ENCODE measurements at regions of chr12 and their contacts with region 1.

Region 1: GRCh38 chr12:5083955-5084849 is 40.5 kb downstream of the KCNA5 start:
- DNase-seq: peak; percentile 60
- ATAC-seq: no peak
- H3K4me3 ChIP-seq: no peak overlapping the region
- H3K27ac ChIP-seq: no peak overlapping the region
- H3K4me1 ChIP-seq: no peaks in the 10 kb centered on the region
- H3K27me3 ChIP-seq: peaks cover 17% of the 10 kb centered on the region; the same call in 1 of the 2 replicates
- CTCF ChIP-seq: peak; percentile 62

Region 2: DNA sequence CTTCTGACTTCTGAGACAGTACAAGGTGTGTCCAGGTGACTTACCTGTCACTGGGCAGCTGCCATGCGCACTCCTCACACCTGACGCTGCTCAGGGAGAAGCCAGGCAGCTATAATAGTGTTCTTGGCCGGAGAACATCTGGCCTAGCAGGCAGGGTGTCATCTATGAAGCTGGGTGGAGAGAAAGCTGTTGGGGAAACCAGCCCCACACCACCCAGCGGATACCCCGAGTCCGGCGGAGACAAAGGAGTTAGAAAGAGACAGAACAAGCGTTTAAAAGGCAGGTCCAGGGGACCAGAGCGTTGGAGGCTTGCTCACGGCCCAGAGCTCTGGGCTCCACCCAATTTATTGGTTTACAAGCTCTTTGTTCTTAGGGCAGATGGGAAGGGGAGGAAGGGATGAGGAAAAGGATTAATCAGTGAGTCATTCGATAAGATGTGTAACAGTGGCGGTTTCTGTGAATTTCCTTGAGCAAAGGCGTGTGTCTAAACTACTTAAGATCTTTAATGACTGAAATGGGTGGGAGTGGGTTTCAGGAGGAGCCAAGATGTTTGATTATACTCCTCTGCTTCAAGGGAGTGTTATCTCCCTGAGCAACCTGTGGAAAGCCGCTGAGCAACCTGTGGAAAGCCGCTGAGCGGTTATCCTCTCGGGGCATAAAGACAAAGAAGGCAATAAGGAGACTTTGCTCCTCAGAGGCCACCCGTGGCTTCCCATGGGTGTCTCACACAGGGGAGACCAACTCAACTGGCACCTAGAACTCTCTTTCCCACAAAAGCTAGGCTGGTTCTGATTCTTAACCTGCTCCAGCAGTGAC is 364.2 kb before region 1 on chr12 and contains the start of gene GALNT8:
- CTCF ChIA-PET with region 1: interaction called, 11 read pairs
- POLR2A ChIA-PET with region 1: no interaction called
- intact Hi-C with region 1: no loop called
- DNase-seq: peak; percentile 9
- ATAC-seq: no peak
- H3K4me3 ChIP-seq: no peak within 1 kb of the TSS
- H3K27ac ChIP-seq: no peak within 1 kb of the TSS
- H3K4me1 ChIP-seq: no peaks in the 10 kb centered on the region
- H3K27me3 ChIP-seq: peaks cover 18% of the 10 kb centered on the region
- CTCF ChIP-seq: no peak
- total RNA-seq, gene GALNT8: not detected in 2 replicates

Region 3: GRCh38 chr12:4975574-4975973 is 108.6 kb before region 1 on chr12:
- CTCF ChIA-PET with region 1: no interaction called
- POLR2A ChIA-PET with region 1: no interaction called
- intact Hi-C with region 1: no loop called
- DNase-seq: no peak
- ATAC-seq: no peak
- H3K4me3 ChIP-seq: no peak overlapping the region
- H3K27ac ChIP-seq: no peak overlapping the region
- H3K4me1 ChIP-seq: no peaks in the 10 kb centered on the region
- H3K27me3 ChIP-seq: peaks cover 8% of the 10 kb centered on the region
- CTCF ChIP-seq: no peak

Region 4: DNA sequence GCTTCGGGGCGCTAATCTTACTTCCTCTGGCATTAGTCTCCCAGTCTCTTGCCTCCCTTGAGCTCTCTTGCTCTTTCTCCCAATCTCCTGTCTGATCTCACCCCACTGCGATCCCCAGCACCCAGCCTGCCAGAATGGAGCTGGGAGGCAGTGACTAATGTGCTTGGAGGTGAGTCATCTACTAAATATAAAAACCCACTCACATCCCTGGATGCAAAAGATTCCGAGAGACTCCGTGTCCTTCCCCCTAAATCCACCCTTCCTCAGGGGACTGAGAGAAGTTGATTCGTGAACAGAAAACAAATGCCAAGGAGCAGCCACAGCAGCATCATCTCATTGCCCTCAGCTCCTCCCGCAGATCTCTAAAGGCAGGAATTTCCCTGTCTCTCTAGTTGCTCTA is 86.3 kb before region 1 on chr12:
- CTCF ChIA-PET with region 1: no interaction called
- POLR2A ChIA-PET with region 1: no interaction called
- intact Hi-C with region 1: no loop called
- DNase-seq: peak; percentile 59
- ATAC-seq: peak; percentile 57; the same call in 1 of the 2 replicates
- H3K4me3 ChIP-seq: no peak overlapping the region
- H3K27ac ChIP-seq: no peak overlapping the region
- H3K4me1 ChIP-seq: no peaks in the 10 kb centered on the region
- H3K27me3 ChIP-seq: no peaks in the 10 kb centered on the region
- CTCF ChIP-seq: no peak

Measured in PC-3 (cell line).